Pancreas (tissue), 10 donors: ENCODE measurements at regions of chr13 and their contacts with region 1.

Region 1: GRCh38 chr13:27533155-27533643 is 82.8 kb upstream of the MTIF3 start:
- DNase-seq: peak; percentile 81 to 99 (median 91)
- ATAC-seq: peak; percentile 95 to 100 (median 100)
- H3K4me3 ChIP-seq: peak overlapping the region in 2 of 4 donors; percentile 16 to 36
- H3K27ac ChIP-seq: peak overlapping the region in 1 of 4 donors; percentile 33
- H3K4me1 ChIP-seq: no peaks in the 10 kb centered on the region
- H3K27me3 ChIP-seq: no peaks in the 10 kb centered on the region
- CTCF ChIP-seq: peak; percentile 87 to 99 (median 92)

Region 2: GRCh38 chr13:27137759-27138158 is 395.4 kb before region 1 on chr13:
- intact Hi-C with region 1: no loop called
- DNase-seq: no peak
- ATAC-seq: peak in 1 of 4 donors; percentile 11
- H3K4me3 ChIP-seq: no peak overlapping the region
- H3K27ac ChIP-seq: no peak overlapping the region
- H3K4me1 ChIP-seq: peaks cover 3 to 16% (median 7%) of the 10 kb centered on the region in 3 donors
- H3K27me3 ChIP-seq: no peaks in the 10 kb centered on the region
- CTCF ChIP-seq: no peak

Region 3: DNA sequence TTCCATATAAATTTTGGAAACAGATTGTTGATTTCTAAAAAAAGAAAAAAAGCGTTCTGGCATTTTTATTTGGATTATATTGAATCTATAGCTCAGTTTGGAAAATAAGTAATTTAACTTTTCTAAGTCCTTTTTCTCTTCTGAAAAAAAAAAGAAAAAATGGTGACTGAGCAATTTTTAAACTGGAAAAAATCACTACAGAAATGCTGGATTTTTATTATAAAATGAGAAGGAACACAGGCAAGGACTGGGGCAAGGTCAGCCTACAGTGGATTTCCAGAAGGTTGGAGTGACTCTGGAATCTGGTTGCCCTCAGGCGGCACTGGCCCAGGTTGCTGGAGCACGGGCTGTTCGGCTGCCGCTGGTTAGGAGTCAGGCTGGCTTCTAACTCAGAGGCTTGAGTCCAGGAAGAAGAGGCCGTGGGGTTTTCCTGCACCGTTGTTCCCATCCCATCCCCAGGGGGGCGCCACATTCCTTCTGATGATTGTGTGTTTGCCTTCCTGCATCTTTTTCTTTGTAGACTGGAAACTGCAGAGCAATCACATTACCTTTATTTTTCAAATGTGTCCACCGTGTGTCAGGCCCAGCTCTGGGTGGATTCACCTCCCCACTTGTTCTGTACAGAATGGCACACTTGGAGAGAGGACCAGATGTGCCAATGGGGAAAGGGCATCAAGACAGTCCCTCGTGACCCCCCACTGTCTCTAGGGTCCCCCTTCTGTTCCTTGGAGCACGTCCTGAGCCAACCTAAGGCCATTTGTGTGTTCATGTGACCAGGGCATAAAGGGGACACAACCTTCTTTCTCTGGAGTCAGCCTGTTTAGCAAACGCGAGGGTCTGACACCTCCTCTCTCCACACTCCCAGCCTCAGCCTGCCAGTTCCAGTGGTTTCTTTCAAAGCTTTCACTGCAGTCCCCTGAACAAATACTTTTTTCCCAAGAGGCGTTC is 153.2 kb before region 1 on chr13:
- intact Hi-C with region 1: loop called in 1 of 3 experiments (anchors 5 kb)
- DNase-seq: peak; percentile 74 to 86 (median 83)
- ATAC-seq: peak; percentile 65 to 92 (median 82)
- H3K4me3 ChIP-seq: no peak overlapping the region
- H3K27ac ChIP-seq: no peak overlapping the region
- H3K4me1 ChIP-seq: peaks cover 3 to 9% (median 8%) of the 10 kb centered on the region in 3 donors
- H3K27me3 ChIP-seq: no peaks in the 10 kb centered on the region
- CTCF ChIP-seq: peak; percentile 31 to 66 (median 62)

Region 4: DNA sequence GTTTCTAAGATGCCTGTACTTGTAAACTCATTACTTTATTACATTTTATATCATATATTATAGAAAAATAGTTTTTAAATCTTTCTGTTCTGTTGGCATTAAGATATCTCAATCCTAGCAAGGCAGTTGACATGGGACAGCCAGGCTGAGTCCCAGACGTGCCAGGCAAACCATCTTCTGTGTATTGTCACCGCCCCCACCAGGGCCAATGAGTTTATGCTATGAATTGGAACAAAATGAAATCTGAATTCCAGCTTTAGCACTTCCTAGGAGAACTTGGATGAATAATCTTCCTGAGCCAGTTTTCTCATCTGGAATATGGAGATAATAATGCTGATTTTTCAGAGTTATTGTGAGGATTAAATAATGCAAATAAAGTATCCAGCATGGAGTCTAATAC is 179.2 kb after region 1 on chr13:
- intact Hi-C with region 1: loop called in 2 of 3 experiments (anchors 5 to 10 kb)
- DNase-seq: peak in 4 of 6 donors; percentile 25 to 41 (median 30)
- ATAC-seq: peak; percentile 58 to 89 (median 80)
- H3K4me3 ChIP-seq: no peak overlapping the region
- H3K27ac ChIP-seq: no peak overlapping the region
- H3K4me1 ChIP-seq: no peaks in the 10 kb centered on the region
- H3K27me3 ChIP-seq: no peaks in the 10 kb centered on the region
- CTCF ChIP-seq: peak in 1 of 4 donors; percentile 23

Region 5: DNA sequence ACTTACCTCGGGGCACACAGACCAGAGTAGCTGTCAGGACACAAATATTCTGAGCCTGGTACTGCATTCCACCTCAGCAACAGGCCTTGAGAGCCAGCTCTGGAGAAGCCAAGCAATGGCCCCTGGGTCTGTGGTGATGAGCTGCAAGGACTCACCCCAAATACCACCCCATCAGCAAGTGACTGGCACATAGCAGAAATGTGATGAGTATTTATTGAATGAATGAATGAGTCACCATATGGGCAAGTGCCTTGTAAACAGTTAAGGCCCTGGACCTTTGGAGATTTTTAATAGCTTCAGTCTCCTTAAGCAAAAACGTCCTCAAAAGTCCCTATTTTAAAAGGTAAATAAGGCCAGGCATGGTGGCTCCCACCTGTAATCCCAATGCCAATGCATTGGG is 277.3 kb after region 1 on chr13:
- intact Hi-C with region 1: loop called in 1 of 3 experiments (anchors 10 kb)
- DNase-seq: no peak
- ATAC-seq: no peak
- H3K4me3 ChIP-seq: no peak overlapping the region
- H3K27ac ChIP-seq: no peak overlapping the region
- H3K4me1 ChIP-seq: no peaks in the 10 kb centered on the region
- H3K27me3 ChIP-seq: no peaks in the 10 kb centered on the region
- CTCF ChIP-seq: no peak